Ovary (tissue), 10 donors: ENCODE measurements at regions of chr12 and their contacts with region 1.

Region 1: DNA sequence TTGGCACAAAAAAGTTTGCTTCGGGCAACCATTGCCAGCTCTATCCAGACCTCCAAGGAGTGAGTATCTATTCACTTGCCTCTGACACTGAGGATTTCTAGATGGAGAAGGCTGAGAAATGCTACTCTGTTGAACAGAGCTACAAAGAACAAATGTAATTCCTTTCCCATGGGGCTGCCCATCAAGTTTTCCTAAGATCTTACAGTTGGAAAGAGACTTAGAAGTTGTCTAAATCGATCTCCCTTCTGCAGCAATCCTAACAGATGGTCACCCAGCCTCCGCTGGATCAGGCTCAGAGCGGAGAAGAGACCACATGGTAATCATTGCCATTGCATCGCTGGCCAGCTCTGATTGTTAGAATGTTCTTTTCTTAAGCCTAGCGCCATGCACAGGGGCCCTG is 110.1 kb upstream of the BCL2L14 start:
- DNase-seq: no peak
- H3K4me3 ChIP-seq: no peak overlapping the region
- H3K27ac ChIP-seq: no peak overlapping the region
- H3K4me1 ChIP-seq: no peaks in the 10 kb centered on the region
- H3K27me3 ChIP-seq: no peaks in the 10 kb centered on the region
- CTCF ChIP-seq: no peak
- EP300 ChIP-seq: no peak
- POLR2A ChIP-seq: no peak

Region 2: GRCh38 chr12:10779103-10779502 is 1181.5 kb before region 1 on chr12:
- intact Hi-C with region 1: no loop called
- DNase-seq: no peak
- H3K4me3 ChIP-seq: no peak overlapping the region
- H3K27ac ChIP-seq: no peak overlapping the region
- H3K4me1 ChIP-seq: no peaks in the 10 kb centered on the region
- H3K27me3 ChIP-seq: no peaks in the 10 kb centered on the region
- CTCF ChIP-seq: no peak
- EP300 ChIP-seq: no peak
- POLR2A ChIP-seq: no peak

Region 3: GRCh38 chr12:11907625-11908024 is 53.0 kb before region 1 on chr12:
- intact Hi-C with region 1: loop called in 1 of 4 experiments (anchors 2 kb)
- DNase-seq: no peak
- H3K4me3 ChIP-seq: no peak overlapping the region
- H3K27ac ChIP-seq: no peak overlapping the region
- H3K4me1 ChIP-seq: no peaks in the 10 kb centered on the region
- H3K27me3 ChIP-seq: no peaks in the 10 kb centered on the region
- CTCF ChIP-seq: no peak
- EP300 ChIP-seq: no peak
- POLR2A ChIP-seq: no peak